SK-N-SH (cell line): ENCODE measurements at regions of chr3 and their contacts with region 1.

Region 1: GRCh38 chr3:101195951-101196713 is 124.2 kb downstream of the IMPG2 start:
- DNase-seq: peak; percentile 10
- H3K4me3 ChIP-seq: no peak overlapping the region
- H3K27ac ChIP-seq: peak overlapping the region in 1 of 2 experiments; percentile 10; a peak in 1 of 4 replicates
- H3K4me1 ChIP-seq: peaks cover 0 to 7% of the 10 kb centered on the region in 2 experiments; a peak in 1 of 4 replicates
- H3K27me3 ChIP-seq: no peaks in the 10 kb centered on the region
- CTCF ChIP-seq: peak; percentile 79
- EP300 ChIP-seq: no peak
- RAD21 ChIP-seq: peak; percentile 89

Region 2: GRCh38 chr3:100603469-100603868 is 592.7 kb before region 1 on chr3:
- CTCF ChIA-PET with region 1: interaction called, 10 read pairs
- POLR2A ChIA-PET with region 1: no interaction called
- DNase-seq: peak; percentile 40
- H3K4me3 ChIP-seq: no peak overlapping the region
- H3K27ac ChIP-seq: peak overlapping the region in 1 of 2 experiments; percentile 25; a peak in 1 of 4 replicates
- H3K4me1 ChIP-seq: no peaks in the 10 kb centered on the region; a peak in 3 of 4 replicates
- H3K27me3 ChIP-seq: no peaks in the 10 kb centered on the region
- CTCF ChIP-seq: peak; percentile 62
- EP300 ChIP-seq: no peak
- RAD21 ChIP-seq: peak; percentile 68

Region 3: GRCh38 chr3:100754563-100755334 is 441.4 kb before region 1 on chr3:
- CTCF ChIA-PET with region 1: interaction called, 15 read pairs
- POLR2A ChIA-PET with region 1: no interaction called
- DNase-seq: peak; percentile 2
- H3K4me3 ChIP-seq: no peak overlapping the region
- H3K27ac ChIP-seq: no peak overlapping the region
- H3K4me1 ChIP-seq: no peaks in the 10 kb centered on the region; a peak in 1 of 4 replicates
- H3K27me3 ChIP-seq: no peaks in the 10 kb centered on the region
- CTCF ChIP-seq: peak; percentile 35
- EP300 ChIP-seq: no peak
- RAD21 ChIP-seq: peak; percentile 67

Region 4: GRCh38 chr3:100825574-100825973 is 370.6 kb before region 1 on chr3:
- CTCF ChIA-PET with region 1: interaction called, 19 read pairs
- POLR2A ChIA-PET with region 1: no interaction called
- DNase-seq: no peak
- H3K4me3 ChIP-seq: no peak overlapping the region
- H3K27ac ChIP-seq: no peak overlapping the region
- H3K4me1 ChIP-seq: no peaks in the 10 kb centered on the region
- H3K27me3 ChIP-seq: no peaks in the 10 kb centered on the region
- CTCF ChIP-seq: no peak
- EP300 ChIP-seq: no peak
- RAD21 ChIP-seq: no peak

Region 5: DNA sequence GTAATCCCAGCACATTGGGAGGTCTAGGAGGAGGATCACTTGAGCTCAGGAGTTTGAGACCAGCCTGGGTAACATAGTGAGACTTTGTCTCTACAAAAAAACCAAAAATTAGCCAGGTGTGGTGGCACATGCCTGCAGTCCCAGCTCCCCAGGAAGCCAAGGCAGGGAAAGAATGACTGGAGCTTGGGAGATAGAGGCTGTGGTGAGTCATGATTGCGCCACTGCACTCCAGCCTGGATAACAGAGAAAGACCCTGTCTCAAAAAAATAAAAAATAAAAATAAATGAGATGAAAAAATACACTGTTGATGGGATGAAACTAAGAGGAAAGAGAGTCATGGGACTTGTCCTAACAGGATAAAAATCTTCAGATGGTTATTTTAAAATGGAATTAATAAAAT is 13.4 kb before region 1 on chr3:
- CTCF ChIA-PET with region 1: interaction called, 17 read pairs
- POLR2A ChIA-PET with region 1: no interaction called
- DNase-seq: no peak
- H3K4me3 ChIP-seq: no peak overlapping the region
- H3K27ac ChIP-seq: no peak overlapping the region
- H3K4me1 ChIP-seq: peaks cover 0 to 6% of the 10 kb centered on the region in 2 experiments; a peak in 2 of 4 replicates
- H3K27me3 ChIP-seq: no peaks in the 10 kb centered on the region
- CTCF ChIP-seq: no peak
- EP300 ChIP-seq: no peak
- RAD21 ChIP-seq: no peak